ENCODE measurements at regions of chr2 and their contacts with region 1.

Region 1: GRCh38 chr2:68715353-68716041 is 19.1 kb upstream of the ARHGAP25 start:
- DNase-seq: peak in 1 of 2 donors; percentile 27
- ATAC-seq: peak in 1 of 2 donors; percentile 64
- H3K4me3 ChIP-seq: no peak overlapping the region
- H3K27ac ChIP-seq: no peak overlapping the region
- H3K4me1 ChIP-seq: no peaks in the 10 kb centered on the region
- H3K27me3 ChIP-seq: peaks cover 0 to 3% (median 0%) of the 10 kb centered on the region in 3 donors
- CTCF ChIP-seq: peak; percentile 30 to 66 (median 46)
- POLR2A ChIP-seq: no peak

Region 2: DNA sequence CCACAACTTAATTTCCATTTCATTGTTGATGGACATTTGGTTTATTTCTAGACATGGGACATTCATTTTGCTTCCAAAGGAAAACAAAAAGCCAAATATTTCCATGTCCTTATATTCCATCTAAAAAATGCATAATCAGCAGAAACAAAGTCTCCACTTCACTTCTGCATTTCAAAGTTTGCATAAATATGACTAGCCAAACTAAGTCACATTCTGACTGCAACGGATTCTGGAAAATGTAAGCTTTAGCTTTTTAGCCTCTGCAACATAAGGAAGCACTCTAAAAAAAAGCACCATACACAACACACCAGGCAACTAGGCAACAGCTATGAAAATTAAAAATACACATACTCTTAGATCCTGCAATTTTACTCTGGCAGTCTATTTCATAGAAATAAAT is 1183.1 kb before region 1 on chr2:
- in situ Hi-C with region 1: no loop called
- intact Hi-C with region 1: no loop called
- DNase-seq: no peak
- ATAC-seq: no peak
- H3K4me3 ChIP-seq: no peak overlapping the region
- H3K27ac ChIP-seq: no peak overlapping the region
- H3K4me1 ChIP-seq: no peaks in the 10 kb centered on the region
- H3K27me3 ChIP-seq: no peaks in the 10 kb centered on the region
- CTCF ChIP-seq: no peak
- POLR2A ChIP-seq: no peak

Region 3: GRCh38 chr2:68467077-68467960 is 248.2 kb before region 1 on chr2 and contains the starts of genes APLF and FBXO48:
- in situ Hi-C with region 1: no loop called
- intact Hi-C with region 1: loop called (anchors 1 kb)
- DNase-seq: peak; percentile 97 to 98
- ATAC-seq: peak; percentile 99
- H3K4me3 ChIP-seq: peak within 1 kb of the TSS; percentile 75 to 93 (median 83)
- H3K27ac ChIP-seq: peak within 1 kb of the TSS; percentile 80 to 89 (median 87)
- H3K4me1 ChIP-seq: peaks cover 20 to 21% of the 10 kb centered on the region in 2 donors
- H3K27me3 ChIP-seq: no peaks in the 10 kb centered on the region
- CTCF ChIP-seq: no peak
- POLR2A ChIP-seq: peak; percentile 47 to 77
- total RNA-seq, gene APLF: 2.3 to 4.8 (median 3.5) TPM
- total RNA-seq, gene FBXO48: 1.1 to 1.9 (median 1.5) TPM

Region 4: GRCh38 chr2:68487773-68488355 is 227.6 kb before region 1 on chr2:
- in situ Hi-C with region 1: loop called (anchors 25 kb)
- intact Hi-C with region 1: no loop called
- DNase-seq: no peak
- ATAC-seq: no peak
- H3K4me3 ChIP-seq: no peak overlapping the region
- H3K27ac ChIP-seq: no peak overlapping the region
- H3K4me1 ChIP-seq: no peaks in the 10 kb centered on the region
- H3K27me3 ChIP-seq: no peaks in the 10 kb centered on the region
- CTCF ChIP-seq: peak in 3 of 5 experiments; percentile 18 to 45 (median 33)
- POLR2A ChIP-seq: no peak

Region 5: GRCh38 chr2:68673631-68674030 is 41.9 kb before region 1 on chr2:
- in situ Hi-C with region 1: no loop called
- intact Hi-C with region 1: no loop called
- DNase-seq: no peak
- ATAC-seq: no peak
- H3K4me3 ChIP-seq: no peak overlapping the region
- H3K27ac ChIP-seq: no peak overlapping the region
- H3K4me1 ChIP-seq: no peaks in the 10 kb centered on the region
- H3K27me3 ChIP-seq: no peaks in the 10 kb centered on the region
- CTCF ChIP-seq: no peak
- POLR2A ChIP-seq: no peak